OCI-LY7 (cell line): ENCODE measurements at regions of chr4 and their contacts with region 1.

Region 1: GRCh38 chr4:89434364-89434988 is 126.9 kb upstream of the GPRIN3 start:
- DNase-seq: peak; percentile 64
- H3K4me3 ChIP-seq: no peak overlapping the region
- H3K27ac ChIP-seq: no peak overlapping the region
- H3K4me1 ChIP-seq: no peaks in the 10 kb centered on the region
- CTCF ChIP-seq: peak; percentile 96

Region 2: GRCh38 chr4:89000844-89001360 is 433.6 kb before region 1 on chr4:
- CTCF ChIA-PET with region 1: no interaction called
- POLR2A ChIA-PET with region 1: no interaction called
- intact Hi-C with region 1: no loop called
- DNase-seq: no peak
- H3K4me3 ChIP-seq: no peak overlapping the region
- H3K27ac ChIP-seq: no peak overlapping the region
- H3K4me1 ChIP-seq: no peaks in the 10 kb centered on the region
- CTCF ChIP-seq: no peak

Region 3: GRCh38 chr4:89158884-89159503 is 275.5 kb before region 1 on chr4:
- CTCF ChIA-PET with region 1: no interaction called
- POLR2A ChIA-PET with region 1: no interaction called
- intact Hi-C with region 1: loop called (anchors 1 kb)
- DNase-seq: peak; percentile 47
- H3K4me3 ChIP-seq: no peak overlapping the region
- H3K27ac ChIP-seq: no peak overlapping the region
- H3K4me1 ChIP-seq: no peaks in the 10 kb centered on the region
- CTCF ChIP-seq: peak; percentile 94

Region 4: DNA sequence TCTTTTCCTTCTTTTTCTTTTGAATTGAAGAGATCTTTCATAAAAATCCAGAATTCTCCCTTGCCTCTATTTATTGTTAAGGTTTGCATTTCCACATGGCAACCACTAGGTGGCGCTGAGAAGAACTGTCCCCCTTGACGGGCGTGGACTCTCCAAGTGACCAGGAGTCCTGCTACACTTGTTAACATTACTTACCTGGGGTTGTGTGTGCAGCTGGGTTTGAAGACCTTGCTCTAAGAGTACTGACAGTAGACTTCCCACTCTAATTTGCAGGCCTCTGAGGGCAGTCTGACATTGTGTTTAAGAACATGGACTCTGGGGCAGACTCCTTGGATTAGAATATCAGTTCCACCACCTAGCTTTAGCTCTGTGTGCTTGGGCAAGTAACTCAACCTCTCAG is 179.6 kb before region 1 on chr4:
- CTCF ChIA-PET with region 1: no interaction called
- POLR2A ChIA-PET with region 1: interaction called, 3 read pairs
- intact Hi-C with region 1: loop called (anchors 1 kb)
- DNase-seq: peak; percentile 48
- H3K4me3 ChIP-seq: no peak overlapping the region
- H3K27ac ChIP-seq: no peak overlapping the region
- H3K4me1 ChIP-seq: no peaks in the 10 kb centered on the region
- CTCF ChIP-seq: peak; percentile 99

Region 5: GRCh38 chr4:89904524-89904923 is 470.0 kb after region 1 on chr4:
- CTCF ChIA-PET with region 1: no interaction called
- POLR2A ChIA-PET with region 1: no interaction called
- intact Hi-C with region 1: loop called (anchors 2 kb)
- DNase-seq: no peak
- H3K4me3 ChIP-seq: no peak overlapping the region
- H3K27ac ChIP-seq: no peak overlapping the region
- H3K4me1 ChIP-seq: no peaks in the 10 kb centered on the region
- CTCF ChIP-seq: no peak